Activated naive CD4-positive, alpha-beta T cell treated with anti-CD3 and anti-CD28 coated beads for 36 hours (primary cell): ENCODE measurements at regions of chr7 and their contacts with region 1.

Region 1: GRCh38 chr7:142496545-142497041 is 238.7 kb upstream of the PRSS58 start:
- DNase-seq: peak; percentile 40
- H3K4me3 Mint-ChIP-seq: peak overlapping the region; percentile 29
- H3K27ac Mint-ChIP-seq: peak overlapping the region; percentile 52
- H3K4me1 Mint-ChIP-seq: peaks cover 70% of the 10 kb centered on the region
- H3K27me3 Mint-ChIP-seq: no peaks in the 10 kb centered on the region

Region 2: GRCh38 chr7:142485617-142486226 is 10.9 kb before region 1 on chr7:
- CTCF ChIA-PET with region 1: interaction called, 16 read pairs
- intact Hi-C with region 1: no loop called
- DNase-seq: peak; percentile 61
- H3K4me3 Mint-ChIP-seq: no peak overlapping the region
- H3K27ac Mint-ChIP-seq: peak overlapping the region; percentile 8
- H3K4me1 Mint-ChIP-seq: peaks cover 44% of the 10 kb centered on the region
- H3K27me3 Mint-ChIP-seq: no peaks in the 10 kb centered on the region

Region 3: DNA sequence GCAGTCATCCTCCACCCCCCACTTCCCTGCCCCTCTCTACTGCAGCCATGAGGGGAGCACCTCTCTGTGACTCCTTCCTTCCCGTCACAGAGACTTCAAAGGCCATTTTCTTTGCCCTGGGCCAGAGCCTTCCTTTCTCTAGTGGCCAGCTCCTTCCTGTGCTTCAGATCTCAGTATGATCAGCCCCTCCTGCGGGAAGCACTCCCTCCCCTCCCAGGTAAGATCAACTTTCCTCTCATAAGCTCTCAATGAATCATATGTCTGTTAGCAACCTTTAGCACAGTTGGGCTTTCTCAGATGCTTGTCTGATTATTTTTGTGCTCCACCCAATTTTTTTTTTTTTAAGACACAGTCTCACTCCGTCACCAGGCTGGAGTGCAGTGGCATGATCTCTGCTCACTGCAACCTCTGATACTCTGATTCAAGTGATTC is 11.7 kb after region 1 on chr7:
- CTCF ChIA-PET with region 1: interaction called, 12 read pairs
- intact Hi-C with region 1: loop called (anchors 1 kb)
- DNase-seq: peak; percentile 44
- H3K4me3 Mint-ChIP-seq: no peak overlapping the region
- H3K27ac Mint-ChIP-seq: peak overlapping the region; percentile 79
- H3K4me1 Mint-ChIP-seq: peaks cover 43% of the 10 kb centered on the region
- H3K27me3 Mint-ChIP-seq: no peaks in the 10 kb centered on the region

Region 4: GRCh38 chr7:142516038-142516501 is 19.5 kb after region 1 on chr7:
- CTCF ChIA-PET with region 1: interaction called, 30 read pairs
- intact Hi-C with region 1: loop called (anchors 2 kb)
- DNase-seq: peak; percentile 54
- H3K4me3 Mint-ChIP-seq: no peak overlapping the region
- H3K27ac Mint-ChIP-seq: peak overlapping the region; percentile 41
- H3K4me1 Mint-ChIP-seq: peaks cover 53% of the 10 kb centered on the region
- H3K27me3 Mint-ChIP-seq: no peaks in the 10 kb centered on the region

Region 5: DNA sequence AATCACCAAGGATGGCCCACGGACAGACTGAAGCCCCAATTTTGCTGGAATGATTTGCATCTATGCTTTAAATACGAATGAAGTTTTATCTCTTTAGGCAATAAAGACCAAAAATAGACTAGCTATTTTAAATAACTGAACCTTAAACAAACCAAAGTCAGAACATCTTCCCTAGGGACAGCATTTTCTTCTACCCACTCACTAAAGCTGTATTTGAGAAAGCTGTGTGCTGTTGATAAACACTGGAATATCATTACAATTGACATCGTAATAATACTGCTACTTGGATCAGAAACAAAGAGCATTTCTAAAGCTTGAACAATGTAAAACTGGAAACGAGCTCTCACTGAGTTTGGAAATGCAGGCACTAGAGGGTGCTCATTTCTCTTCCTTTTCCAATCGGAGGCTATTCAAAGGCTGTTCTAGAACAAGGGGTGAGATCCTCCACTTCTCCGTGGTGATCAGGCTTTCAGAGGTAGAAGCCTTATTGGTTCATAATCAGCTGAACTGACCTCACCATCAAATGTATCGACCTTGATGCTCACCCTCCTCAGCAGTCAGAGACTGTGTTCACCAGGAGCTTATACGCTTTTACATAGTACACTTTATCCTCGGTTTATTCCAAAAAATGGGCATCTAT is 27.3 kb after region 1 on chr7:
- CTCF ChIA-PET with region 1: interaction called, 30 read pairs
- intact Hi-C with region 1: no loop called
- DNase-seq: no peak
- H3K4me3 Mint-ChIP-seq: no peak overlapping the region
- H3K27ac Mint-ChIP-seq: no peak overlapping the region
- H3K4me1 Mint-ChIP-seq: peaks cover 15% of the 10 kb centered on the region
- H3K27me3 Mint-ChIP-seq: no peaks in the 10 kb centered on the region

Region 6: DNA sequence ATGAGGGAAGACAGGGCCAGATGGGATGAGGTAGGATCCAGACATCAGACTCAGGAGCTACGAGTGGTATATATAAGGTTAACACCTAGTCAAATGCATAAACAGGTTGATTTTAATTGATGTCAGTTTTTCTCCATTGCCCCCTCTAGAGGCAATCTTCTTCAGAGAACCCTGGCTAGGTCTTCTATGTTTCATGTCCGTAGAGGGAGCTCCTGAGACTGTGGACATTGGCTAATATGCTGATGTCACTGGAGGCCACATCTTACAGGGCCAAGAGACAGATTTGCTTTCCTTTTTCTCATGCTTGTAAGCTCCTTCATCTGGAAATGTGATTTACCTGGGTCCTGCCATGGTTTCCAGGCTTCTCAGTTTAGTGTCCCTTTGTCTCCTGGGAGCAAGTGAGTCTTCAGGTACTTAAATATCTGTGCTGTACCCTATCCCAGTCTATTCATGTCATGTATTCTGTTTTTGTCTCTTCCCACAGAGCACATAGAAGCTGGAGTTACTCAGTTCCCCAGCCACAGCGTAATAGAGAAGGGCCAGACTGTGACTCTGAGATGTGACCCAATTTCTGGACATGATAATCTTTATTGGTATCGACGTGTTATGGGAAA is 91.1 kb after region 1 on chr7:
- CTCF ChIA-PET with region 1: interaction called, 4 read pairs
- intact Hi-C with region 1: loop called (anchors 1 kb)
- DNase-seq: no peak
- H3K4me3 Mint-ChIP-seq: peak overlapping the region; percentile 44
- H3K27ac Mint-ChIP-seq: peak overlapping the region; percentile 70
- H3K4me1 Mint-ChIP-seq: peaks cover 12% of the 10 kb centered on the region
- H3K27me3 Mint-ChIP-seq: no peaks in the 10 kb centered on the region